ENCODE measurements at regions of chr9 and their contacts with region 1.

Region 1: DNA sequence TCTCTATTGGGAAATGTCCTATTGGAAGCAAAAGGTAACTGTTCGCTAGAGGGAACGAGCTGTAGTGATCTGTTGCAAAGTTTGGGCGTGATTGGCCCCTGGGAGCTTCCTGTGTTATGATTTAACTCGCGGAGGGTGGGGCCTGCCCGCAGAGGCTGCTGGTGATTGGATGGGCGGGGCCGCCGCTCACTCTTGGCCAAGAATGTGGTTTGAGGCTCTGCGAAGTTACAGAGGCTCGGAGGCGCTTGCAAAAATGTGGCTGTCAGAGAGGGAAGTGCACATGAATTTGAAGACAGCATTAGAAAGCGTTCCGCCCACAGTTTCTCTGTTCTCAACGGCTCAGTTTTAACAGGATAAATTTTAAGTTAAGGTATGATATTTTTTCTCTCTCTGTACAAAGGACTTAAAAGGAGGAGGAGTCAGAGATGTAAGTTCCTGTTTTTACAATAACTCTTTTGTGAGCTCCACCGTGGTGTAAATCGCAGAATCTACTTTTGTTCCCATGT is 46.9 kb downstream of the CNTRL start:
- DNase-seq: peak; percentile 95
- ATAC-seq: peak; percentile 100
- H3K4me3 ChIP-seq: peak overlapping the region; percentile 44 to 78 (median 65)
- H3K4me3 Mint-ChIP-seq: peak overlapping the region; percentile 86
- H3K27ac ChIP-seq: peak overlapping the region; percentile 52 to 75
- H3K27ac Mint-ChIP-seq: peak overlapping the region; percentile 90
- H3K4me1 ChIP-seq: peaks cover 11 to 19% of the 10 kb centered on the region in 2 donors
- H3K4me1 Mint-ChIP-seq: peaks cover 42% of the 10 kb centered on the region
- H3K27me3 ChIP-seq: no peaks in the 10 kb centered on the region
- H3K27me3 Mint-ChIP-seq: no peaks in the 10 kb centered on the region
- CTCF ChIP-seq: peak; percentile 28

Region 2: GRCh38 chr9:120668399-120668798 is 453.2 kb before region 1 on chr9:
- CTCF ChIA-PET with region 1: no interaction called
- POLR2A ChIA-PET with region 1: no interaction called
- intact Hi-C with region 1: no loop called
- DNase-seq: no peak
- ATAC-seq: no peak
- H3K4me3 ChIP-seq: no peak overlapping the region
- H3K4me3 Mint-ChIP-seq: no peak overlapping the region
- H3K27ac ChIP-seq: no peak overlapping the region
- H3K27ac Mint-ChIP-seq: no peak overlapping the region
- H3K4me1 ChIP-seq: peaks cover 0 to 3% of the 10 kb centered on the region in 2 donors
- H3K4me1 Mint-ChIP-seq: peaks cover 10% of the 10 kb centered on the region
- H3K27me3 ChIP-seq: no peaks in the 10 kb centered on the region
- H3K27me3 Mint-ChIP-seq: no peaks in the 10 kb centered on the region
- CTCF ChIP-seq: no peak

Region 3: DNA sequence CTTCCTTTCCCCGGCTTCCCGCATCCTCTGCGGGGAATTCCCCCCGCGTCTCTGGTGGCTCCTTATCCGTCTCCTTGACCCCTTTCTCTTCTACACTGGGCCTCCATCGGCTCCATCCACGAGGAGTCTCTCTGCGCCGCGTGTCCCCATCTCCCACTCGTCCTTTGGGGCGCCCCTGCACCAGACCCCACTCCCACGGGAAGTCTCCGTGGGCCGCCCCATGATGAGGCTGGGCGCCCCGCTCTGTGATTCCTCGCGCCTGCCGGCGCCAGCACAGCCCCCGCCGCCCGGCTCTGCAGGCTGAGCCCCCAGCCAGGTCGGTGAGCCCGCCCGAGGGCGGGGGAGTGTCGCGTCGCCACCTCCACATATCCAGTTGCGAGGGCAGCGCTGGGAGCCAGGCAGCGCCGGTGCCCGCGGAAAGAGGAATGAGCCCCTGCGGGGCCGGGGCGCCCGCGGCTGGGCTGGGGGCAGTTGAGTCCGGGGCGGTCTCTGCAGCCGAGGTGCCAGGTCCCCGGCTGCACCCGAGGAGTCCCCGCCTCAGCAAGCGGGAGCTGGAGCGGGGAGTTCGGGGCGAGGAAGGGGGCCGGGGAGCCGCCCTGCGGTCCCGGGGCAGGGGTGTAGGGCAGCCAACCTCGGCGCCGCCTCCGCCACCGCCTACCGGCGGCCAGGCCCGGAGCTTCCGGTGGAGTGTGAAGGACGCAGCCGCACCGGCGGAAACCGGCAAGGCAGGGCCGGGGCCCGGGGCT is 193.0 kb before region 1 on chr9:
- CTCF ChIA-PET with region 1: no interaction called
- POLR2A ChIA-PET with region 1: no interaction called
- intact Hi-C with region 1: loop called (anchors 1 kb)
- DNase-seq: peak; percentile 83
- ATAC-seq: peak; percentile 60
- H3K4me3 ChIP-seq: peak overlapping the region in 4 of 5 experiments; percentile 56 to 82 (median 72)
- H3K4me3 Mint-ChIP-seq: peak overlapping the region; percentile 81
- H3K27ac ChIP-seq: peak overlapping the region; percentile 90 to 99
- H3K27ac Mint-ChIP-seq: peak overlapping the region; percentile 89
- H3K4me1 ChIP-seq: peaks cover 75 to 89% of the 10 kb centered on the region in 2 donors
- H3K4me1 Mint-ChIP-seq: peaks cover 86% of the 10 kb centered on the region
- H3K27me3 ChIP-seq: no peaks in the 10 kb centered on the region
- H3K27me3 Mint-ChIP-seq: no peaks in the 10 kb centered on the region
- CTCF ChIP-seq: peak; percentile 29

Region 4: DNA sequence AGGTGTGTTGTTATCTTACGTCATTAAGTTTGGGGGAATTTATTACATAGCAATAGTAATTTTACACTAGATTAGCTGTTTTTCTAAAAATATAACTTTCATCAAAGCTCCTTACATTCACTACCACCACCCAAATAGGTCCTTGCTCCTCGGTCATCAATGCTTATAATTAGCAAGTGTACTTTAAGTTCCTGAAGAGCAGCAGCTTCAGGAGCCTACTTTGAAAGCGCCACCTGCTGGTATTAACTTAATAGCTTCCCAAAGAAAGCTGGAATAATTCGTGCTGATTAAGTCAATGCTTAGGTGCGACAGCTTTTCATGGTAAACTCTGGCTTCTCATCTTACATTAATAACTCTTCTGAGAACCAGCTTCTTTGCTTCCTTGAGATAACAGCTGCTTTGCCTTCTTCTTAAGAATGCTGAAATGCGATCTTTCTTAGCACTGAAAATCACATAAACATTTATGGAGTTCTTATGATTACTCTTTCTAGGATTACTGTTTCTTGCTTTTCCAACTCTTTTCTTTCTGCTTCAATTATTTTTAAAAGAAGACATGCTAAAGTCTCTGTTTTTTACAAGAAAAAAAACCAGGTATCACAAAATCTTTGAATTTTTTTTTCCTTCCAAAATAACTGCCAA is 61.5 kb before region 1 on chr9:
- CTCF ChIA-PET with region 1: interaction called, 11 read pairs
- POLR2A ChIA-PET with region 1: no interaction called
- intact Hi-C with region 1: no loop called
- DNase-seq: peak; percentile 76
- ATAC-seq: peak; percentile 51
- H3K4me3 ChIP-seq: no peak overlapping the region
- H3K4me3 Mint-ChIP-seq: no peak overlapping the region
- H3K27ac ChIP-seq: no peak overlapping the region
- H3K27ac Mint-ChIP-seq: no peak overlapping the region
- H3K4me1 ChIP-seq: peaks cover 0 to 7% of the 10 kb centered on the region in 2 donors
- H3K4me1 Mint-ChIP-seq: peaks cover 6% of the 10 kb centered on the region
- H3K27me3 ChIP-seq: no peaks in the 10 kb centered on the region
- H3K27me3 Mint-ChIP-seq: no peaks in the 10 kb centered on the region
- CTCF ChIP-seq: peak; percentile 81

Region 5: GRCh38 chr9:121098567-121099198 is 23.0 kb before region 1 on chr9:
- CTCF ChIA-PET with region 1: no interaction called
- POLR2A ChIA-PET with region 1: no interaction called
- intact Hi-C with region 1: loop called (anchors 1 kb)
- DNase-seq: peak; percentile 73
- ATAC-seq: peak; percentile 99
- H3K4me3 ChIP-seq: no peak overlapping the region
- H3K4me3 Mint-ChIP-seq: peak overlapping the region; percentile 0
- H3K27ac ChIP-seq: peak overlapping the region; percentile 28 to 68
- H3K27ac Mint-ChIP-seq: peak overlapping the region; percentile 46
- H3K4me1 ChIP-seq: peaks cover 14 to 15% of the 10 kb centered on the region in 2 donors
- H3K4me1 Mint-ChIP-seq: peaks cover 18% of the 10 kb centered on the region
- H3K27me3 ChIP-seq: no peaks in the 10 kb centered on the region
- H3K27me3 Mint-ChIP-seq: no peaks in the 10 kb centered on the region
- CTCF ChIP-seq: no peak